Activated B cell treated with CpG ODN at 0.5 μM for 24 hours (primary cell): ENCODE measurements at regions of chr12 and their contacts with region 1.

Region 1: DNA sequence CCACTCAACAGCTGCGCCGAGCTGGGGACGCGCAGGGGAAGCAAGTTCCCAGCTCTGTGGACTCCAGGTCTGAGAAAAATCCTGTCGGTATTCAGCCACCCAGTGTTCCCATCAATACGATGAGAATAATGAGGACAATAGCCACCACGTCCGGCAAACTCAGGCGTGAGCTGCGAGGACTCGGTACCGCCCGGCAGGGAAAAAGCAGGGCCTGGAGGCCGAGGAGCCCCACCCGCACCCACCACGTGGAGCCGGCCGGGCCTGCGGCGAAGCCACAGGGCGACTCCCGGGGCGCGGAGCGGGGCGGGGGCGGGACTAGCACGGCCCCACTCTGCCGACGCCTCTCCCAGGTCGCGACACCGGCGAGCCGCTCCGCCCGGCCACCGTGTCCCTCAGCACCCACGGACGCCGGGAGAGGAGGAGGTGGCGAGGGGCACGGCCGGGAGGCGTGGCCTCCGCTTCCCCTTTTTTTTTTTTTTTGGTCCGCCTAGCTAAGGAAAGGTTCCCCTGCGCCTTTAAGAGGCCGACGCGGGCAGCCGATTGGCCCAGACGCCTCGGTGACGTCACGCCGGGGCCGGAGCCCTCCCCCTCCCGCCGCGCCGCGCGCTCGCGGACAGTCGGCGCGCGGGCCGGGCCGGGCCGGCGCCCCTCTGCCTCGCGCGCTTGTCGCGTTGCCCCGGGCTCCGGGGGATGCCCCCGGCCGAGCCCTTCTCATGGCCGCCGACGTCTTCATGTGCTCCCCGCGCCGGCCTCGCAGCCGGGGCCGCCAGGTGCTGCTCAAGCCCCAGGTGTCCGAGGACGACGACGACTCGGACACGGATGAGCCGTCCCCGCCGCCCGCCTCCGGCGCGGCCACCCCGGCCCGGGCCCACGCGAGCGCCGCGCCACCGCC is at the start of gene MLXIP:
- DNase-seq: peak; percentile 89
- ATAC-seq: peak; percentile 80
- H3K4me3 Mint-ChIP-seq: peak within 1 kb of the TSS; percentile 86
- H3K27ac Mint-ChIP-seq: peak within 1 kb of the TSS; percentile 74
- H3K4me1 Mint-ChIP-seq: peaks cover 66% of the 10 kb centered on the region
- H3K27me3 Mint-ChIP-seq: no peaks in the 10 kb centered on the region
- CTCF ChIP-seq: no peak
- total RNA-seq, gene MLXIP: 26.7 and 33.7 TPM in 2 replicates

Region 2: GRCh38 chr12:122021822-122022526 is 56.4 kb before region 1 on chr12 and contains the start of gene BCL7A:
- CTCF ChIA-PET with region 1: no interaction called
- POLR2A ChIA-PET with region 1: interaction called, 8 read pairs
- intact Hi-C with region 1: loop called (anchors 2 kb)
- DNase-seq: peak; percentile 72
- ATAC-seq: peak; percentile 76
- H3K4me3 Mint-ChIP-seq: peak within 1 kb of the TSS; percentile 91
- H3K27ac Mint-ChIP-seq: peak within 1 kb of the TSS; percentile 95
- H3K4me1 Mint-ChIP-seq: peaks cover 46% of the 10 kb centered on the region
- H3K27me3 Mint-ChIP-seq: peaks cover 2% of the 10 kb centered on the region
- CTCF ChIP-seq: no peak
- total RNA-seq, gene BCL7A: 38.6 and 41.4 TPM in 2 replicates

Region 3: GRCh38 chr12:122064025-122064777 is 14.2 kb before region 1 on chr12:
- CTCF ChIA-PET with region 1: no interaction called
- POLR2A ChIA-PET with region 1: interaction called, 39 read pairs
- intact Hi-C with region 1: loop called (anchors 1 kb)
- DNase-seq: no peak
- ATAC-seq: peak; percentile 82
- H3K4me3 Mint-ChIP-seq: no peak overlapping the region
- H3K27ac Mint-ChIP-seq: peak overlapping the region; percentile 32
- H3K4me1 Mint-ChIP-seq: peaks cover 49% of the 10 kb centered on the region
- H3K27me3 Mint-ChIP-seq: no peaks in the 10 kb centered on the region
- CTCF ChIP-seq: no peak

Region 4: GRCh38 chr12:122099856-122100255 is 21.5 kb after region 1 on chr12:
- CTCF ChIA-PET with region 1: no interaction called
- POLR2A ChIA-PET with region 1: interaction called, 8 read pairs
- intact Hi-C with region 1: loop called (anchors 2 kb)
- DNase-seq: no peak
- ATAC-seq: peak; percentile 21
- H3K4me3 Mint-ChIP-seq: peak overlapping the region; percentile 24
- H3K27ac Mint-ChIP-seq: peak overlapping the region; percentile 73
- H3K4me1 Mint-ChIP-seq: peaks cover 56% of the 10 kb centered on the region
- H3K27me3 Mint-ChIP-seq: no peaks in the 10 kb centered on the region
- CTCF ChIP-seq: no peak

Region 5: DNA sequence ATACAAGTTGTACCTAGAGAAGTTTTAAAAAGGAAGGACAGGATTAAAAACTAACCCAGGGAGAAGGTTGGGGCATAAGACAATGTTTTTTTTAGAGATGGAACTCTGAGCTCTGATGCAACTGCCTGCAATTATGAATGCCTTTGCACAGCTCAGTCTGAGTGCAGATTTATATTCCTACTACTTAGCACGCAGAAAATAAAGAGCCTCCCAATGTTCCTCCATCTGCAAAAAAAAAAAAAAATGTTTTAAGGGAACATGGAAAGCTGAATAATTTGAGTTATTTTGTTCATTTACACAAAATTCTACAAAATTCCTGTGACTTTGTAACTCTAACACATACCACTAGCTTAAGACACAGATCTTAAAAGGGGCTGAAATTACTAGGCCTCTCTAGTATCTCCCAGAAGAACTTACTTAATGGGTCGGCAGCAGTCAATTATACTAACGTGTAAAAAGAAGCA is 328.3 kb after region 1 on chr12:
- CTCF ChIA-PET with region 1: no interaction called
- POLR2A ChIA-PET with region 1: no interaction called
- intact Hi-C with region 1: no loop called
- DNase-seq: no peak
- ATAC-seq: no peak
- H3K4me3 Mint-ChIP-seq: no peak overlapping the region
- H3K27ac Mint-ChIP-seq: peak overlapping the region; percentile 16
- H3K4me1 Mint-ChIP-seq: peaks cover 46% of the 10 kb centered on the region
- H3K27me3 Mint-ChIP-seq: no peaks in the 10 kb centered on the region
- CTCF ChIP-seq: no peak

Region 6: DNA sequence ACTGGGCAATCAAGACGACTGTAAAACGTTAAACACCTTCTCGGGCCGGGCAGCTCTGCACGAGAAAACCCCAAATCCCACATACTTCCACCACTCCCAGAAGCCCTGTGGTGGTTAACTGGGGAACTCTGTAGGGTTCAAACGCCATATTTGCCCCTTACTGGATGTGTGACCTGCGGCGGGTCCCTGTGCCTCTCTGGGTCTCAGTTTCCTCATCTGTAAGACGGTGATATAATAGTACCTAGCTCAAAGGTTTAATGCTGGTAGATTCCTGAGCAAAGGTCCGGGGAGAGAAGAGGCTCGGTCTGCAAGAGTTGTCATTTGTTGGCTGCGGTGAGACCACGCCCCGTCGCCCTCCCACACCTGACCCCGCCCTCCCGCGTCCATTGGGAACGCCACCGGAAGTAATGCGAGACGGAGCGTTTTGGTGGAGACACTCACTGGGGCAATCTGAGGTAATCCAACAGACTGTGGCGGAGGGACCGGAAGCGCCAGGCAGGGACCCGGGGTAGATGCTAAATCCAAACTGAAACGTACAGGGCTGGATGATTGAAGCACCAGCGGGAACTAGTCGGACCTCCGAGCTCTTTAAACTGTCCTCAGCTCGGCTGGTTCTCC is 896.0 kb after region 1 on chr12:
- CTCF ChIA-PET with region 1: no interaction called
- POLR2A ChIA-PET with region 1: no interaction called
- intact Hi-C with region 1: loop called (anchors 5 kb)
- DNase-seq: peak; percentile 96
- ATAC-seq: peak; percentile 87
- H3K4me3 Mint-ChIP-seq: peak overlapping the region; percentile 98
- H3K27ac Mint-ChIP-seq: peak overlapping the region; percentile 99
- H3K4me1 Mint-ChIP-seq: peaks cover 28% of the 10 kb centered on the region
- H3K27me3 Mint-ChIP-seq: no peaks in the 10 kb centered on the region
- CTCF ChIP-seq: no peak